Vagina (tissue), 2 donors: ENCODE measurements at regions of chr14 and their contacts with region 1.

Region 1: DNA sequence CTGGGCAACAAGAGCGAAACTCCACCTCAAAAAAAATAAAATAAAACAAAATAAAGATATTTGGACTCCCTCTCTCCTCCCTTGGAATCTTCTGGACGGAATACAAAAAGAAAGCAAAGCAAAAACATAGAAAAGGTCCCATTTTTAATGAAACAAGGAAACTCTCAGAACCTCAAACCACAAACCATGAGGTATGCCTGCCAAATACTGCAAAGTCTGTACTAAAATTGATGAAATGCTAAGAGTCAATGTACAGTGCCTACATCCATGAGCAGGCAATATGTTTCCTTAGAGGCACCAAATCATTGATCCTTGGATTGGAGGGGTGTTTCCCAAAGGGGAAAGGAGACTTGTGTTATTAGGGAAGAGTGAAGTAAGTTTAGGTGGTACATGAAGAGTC is 8.2 kb upstream of the RPS6KA5 start:
- DNase-seq: no peak
- H3K4me3 ChIP-seq: no peak overlapping the region
- H3K27ac ChIP-seq: no peak overlapping the region
- H3K4me1 ChIP-seq: no peaks in the 10 kb centered on the region
- H3K27me3 ChIP-seq: no peaks in the 10 kb centered on the region
- CTCF ChIP-seq: no peak
- POLR2A ChIP-seq: no peak

Region 2: DNA sequence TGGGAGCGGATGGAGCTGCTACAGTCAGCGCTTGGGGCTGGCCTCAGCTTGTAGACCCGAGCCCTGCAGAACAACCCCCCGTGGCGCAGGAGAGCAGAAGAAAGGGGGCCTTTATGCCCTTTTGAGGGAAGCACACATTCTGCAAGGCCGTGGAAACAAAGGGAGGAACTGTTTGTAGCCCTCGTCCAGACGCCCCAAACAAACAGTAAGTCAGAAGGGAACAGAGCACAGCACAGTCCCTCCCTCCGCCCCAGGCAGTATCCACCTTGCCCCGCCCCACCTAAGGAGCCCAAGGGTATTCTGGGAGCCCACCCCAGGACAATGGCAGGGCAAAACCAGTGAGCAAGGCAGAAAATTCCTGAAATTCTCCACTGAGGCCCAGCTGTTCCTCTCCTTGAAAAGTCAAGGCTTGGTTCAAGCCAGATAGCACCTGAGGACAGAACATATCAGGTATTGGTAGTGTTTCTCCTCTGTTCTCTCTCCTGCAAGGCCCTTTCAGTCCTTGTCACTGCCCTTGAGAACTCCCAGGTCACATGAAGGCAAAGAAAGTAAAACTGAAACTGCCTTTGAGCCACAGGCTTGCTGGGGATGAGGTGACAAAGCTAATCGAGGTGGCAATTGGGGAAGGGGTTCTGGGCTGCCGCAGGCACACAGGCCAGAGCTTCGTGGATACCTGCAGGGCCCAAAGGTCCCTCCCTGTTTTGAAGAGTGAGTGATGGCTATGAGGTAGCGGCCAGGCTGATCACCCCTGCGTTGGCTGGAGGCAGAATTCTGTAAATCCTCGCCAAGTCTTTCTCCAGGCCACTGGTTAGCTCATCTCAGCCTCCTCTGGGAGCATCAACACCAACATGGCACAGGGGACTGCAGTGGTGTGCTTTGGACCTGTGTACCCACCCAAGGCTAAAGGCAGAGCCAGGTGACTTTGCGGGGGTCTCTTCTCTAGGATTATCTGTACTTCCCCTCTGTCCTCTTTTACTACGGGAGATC is 45.7 kb after region 1 on chr14:
- intact Hi-C with region 1: loop called (anchors 5 kb)
- DNase-seq: no peak
- H3K4me3 ChIP-seq: peak overlapping the region; percentile 68 to 71
- H3K27ac ChIP-seq: peak overlapping the region; percentile 97
- H3K4me1 ChIP-seq: peaks cover 65% of the 10 kb centered on the region
- H3K27me3 ChIP-seq: no peaks in the 10 kb centered on the region
- CTCF ChIP-seq: no peak
- POLR2A ChIP-seq: peak in 1 of 2 donors; percentile 29